Common myeloid progenitor, CD34-positive (primary cell): ENCODE measurements at regions of chr1 and their contacts with region 1.

Region 1: DNA sequence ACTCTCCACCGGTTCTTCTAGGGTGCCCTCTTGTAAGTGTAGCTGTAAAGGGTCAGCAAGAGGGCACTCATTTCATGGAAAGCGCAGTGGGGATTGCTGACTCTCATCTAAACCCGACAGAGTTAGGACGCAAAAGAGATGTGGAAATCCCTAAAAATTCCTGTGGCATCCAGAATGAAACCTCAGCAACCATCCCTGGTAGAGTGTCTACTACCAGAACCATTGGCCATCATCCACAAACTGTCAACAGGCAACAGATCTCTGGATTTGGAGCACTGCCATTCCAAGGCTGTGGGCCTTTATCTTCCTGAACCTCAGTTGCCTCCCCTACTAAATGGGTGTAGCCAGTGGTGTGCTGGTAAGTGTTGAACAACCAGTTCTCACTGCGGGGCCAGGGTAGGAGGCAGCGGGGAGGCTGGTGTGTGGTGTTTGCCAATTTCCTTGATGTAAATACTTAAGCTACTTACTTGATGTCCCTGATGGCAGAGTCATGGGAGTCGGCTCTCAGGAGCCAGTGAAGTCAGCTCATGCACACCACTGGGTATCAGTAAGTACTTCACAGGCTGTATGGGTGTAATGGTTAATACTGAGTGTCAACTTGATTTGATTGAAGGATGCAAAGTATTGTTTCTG is 195.8 kb downstream of the KAZN start:
- DNase-seq: no peak
- H3K4me3 ChIP-seq: no peak overlapping the region
- H3K27ac ChIP-seq: no peak overlapping the region
- H3K4me1 ChIP-seq: peaks cover 0 to 12% (median 2%) of the 10 kb centered on the region in 4 experiments
- H3K27me3 ChIP-seq: no peaks in the 10 kb centered on the region

Region 2: GRCh38 chr1:14804626-14805025 is 10.4 kb after region 1 on chr1:
- CTCF ChIA-PET with region 1: interaction called, 22 read pairs
- POLR2A ChIA-PET with region 1: interaction called, 8 read pairs
- DNase-seq: peak in 2 of 3 donors; percentile 54 to 64
- H3K4me3 ChIP-seq: no peak overlapping the region
- H3K27ac ChIP-seq: no peak overlapping the region
- H3K4me1 ChIP-seq: peaks cover 0 to 11% (median 2%) of the 10 kb centered on the region in 4 experiments
- H3K27me3 ChIP-seq: no peaks in the 10 kb centered on the region